Aorta (tissue), 5 donors: ENCODE measurements at regions of chr2 and their contacts with region 1.

Region 1: DNA sequence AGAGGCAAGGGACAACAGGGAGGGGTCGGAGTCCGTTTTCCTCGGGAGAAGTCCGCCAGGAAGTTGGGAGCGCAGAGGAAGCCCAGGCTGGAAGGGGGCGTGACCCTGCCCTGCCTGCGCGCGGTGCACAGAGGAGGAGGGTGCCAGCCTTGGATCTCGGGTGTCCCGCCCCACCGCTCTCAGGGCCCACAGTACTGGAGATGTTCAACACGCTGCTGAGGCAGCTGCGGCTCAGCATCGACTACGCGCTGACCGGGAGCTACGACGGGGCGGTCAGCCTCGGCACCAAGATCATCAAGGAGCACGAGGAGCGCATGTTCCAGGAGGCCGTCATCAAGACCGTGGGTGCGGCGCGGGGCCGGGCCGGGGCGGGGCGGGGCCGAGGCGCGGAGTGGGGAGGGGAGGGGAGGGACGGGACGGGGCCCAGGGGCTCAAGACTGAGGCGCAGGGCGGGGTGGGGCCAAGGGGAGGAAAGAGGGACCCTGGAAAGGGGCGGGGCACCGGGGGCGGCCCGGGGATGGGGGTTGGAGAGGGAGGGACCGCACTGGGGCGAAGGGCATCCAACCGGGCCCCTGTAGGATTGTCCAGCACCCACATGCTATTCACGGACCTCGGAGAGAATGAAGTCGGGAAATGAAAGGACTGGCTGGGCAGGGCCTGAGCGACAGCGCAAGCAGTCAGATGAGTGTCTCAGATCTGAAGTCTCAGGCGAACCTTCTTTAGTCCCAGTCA is 36.6 kb downstream of the POMC start:
- DNase-seq: no peak
- ATAC-seq: peak; percentile 6
- H3K4me3 ChIP-seq: no peak overlapping the region
- H3K27ac ChIP-seq: no peak overlapping the region
- H3K4me1 ChIP-seq: no peaks in the 10 kb centered on the region
- H3K27me3 ChIP-seq: no peaks in the 10 kb centered on the region

Region 2: GRCh38 chr2:24971536-24972314 is 160.0 kb before region 1 on chr2 and contains the start of gene DNAJC27:
- intact Hi-C with region 1: loop called (anchors 1 kb)
- DNase-seq: peak; percentile 99
- ATAC-seq: peak; percentile 98
- H3K4me3 ChIP-seq: peak within 1 kb of the TSS; percentile 56 to 80
- H3K27ac ChIP-seq: peak within 1 kb of the TSS; percentile 98
- H3K4me1 ChIP-seq: no peaks in the 10 kb centered on the region
- H3K27me3 ChIP-seq: no peaks in the 10 kb centered on the region
- total RNA-seq, gene DNAJC27: 6.7 to 7.3 TPM

Region 3: DNA sequence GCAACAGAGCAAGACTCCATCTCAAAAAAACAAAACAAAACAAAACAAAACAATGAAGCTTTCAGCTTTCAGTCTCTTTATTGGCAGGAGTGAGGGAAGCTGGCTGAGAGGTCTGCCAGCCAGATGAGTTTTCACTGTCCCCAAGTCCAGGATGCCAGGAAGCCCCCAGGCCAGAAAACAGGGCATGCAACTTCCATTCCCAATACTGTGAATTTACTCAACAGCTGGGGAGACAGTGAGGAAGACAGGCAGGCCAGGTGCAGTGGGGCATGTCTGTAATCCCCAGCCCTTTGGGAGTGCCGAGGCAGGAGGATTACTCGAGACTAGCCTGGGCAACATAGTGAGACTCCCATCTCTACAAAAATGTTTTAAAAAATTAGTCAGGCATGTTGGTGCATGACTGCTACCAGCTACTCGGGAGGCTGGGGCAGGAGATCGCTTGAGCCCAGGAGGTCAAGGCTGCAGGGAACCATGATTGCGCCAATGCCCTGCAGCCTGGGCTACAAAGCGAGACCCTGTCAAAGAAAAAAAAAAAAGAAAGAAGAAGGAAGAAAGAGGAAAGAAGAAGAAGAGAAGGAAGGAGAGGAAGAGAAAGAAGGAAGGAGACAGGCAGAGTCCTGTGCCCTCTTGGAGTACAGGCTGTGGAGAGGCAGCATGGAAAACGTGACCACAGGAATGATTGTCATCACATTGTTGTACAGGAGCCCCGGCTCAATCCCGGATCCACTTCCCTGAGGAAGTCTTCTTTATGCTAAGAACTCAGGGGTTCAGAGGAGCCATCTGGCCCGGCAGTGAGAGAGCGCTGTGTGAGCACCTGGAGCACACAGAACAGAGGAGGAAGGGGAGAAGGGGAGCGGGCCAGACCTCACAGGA is 65.8 kb after region 1 on chr2:
- intact Hi-C with region 1: loop called in 1 of 2 experiments (anchors 2 kb)
- DNase-seq: peak in 1 of 2 donors; percentile 45
- ATAC-seq: no peak
- H3K4me3 ChIP-seq: no peak overlapping the region
- H3K27ac ChIP-seq: no peak overlapping the region
- H3K4me1 ChIP-seq: no peaks in the 10 kb centered on the region
- H3K27me3 ChIP-seq: no peaks in the 10 kb centered on the region